H1 (cell line): ENCODE measurements at regions of chr15 and their contacts with region 1.

Region 1: DNA sequence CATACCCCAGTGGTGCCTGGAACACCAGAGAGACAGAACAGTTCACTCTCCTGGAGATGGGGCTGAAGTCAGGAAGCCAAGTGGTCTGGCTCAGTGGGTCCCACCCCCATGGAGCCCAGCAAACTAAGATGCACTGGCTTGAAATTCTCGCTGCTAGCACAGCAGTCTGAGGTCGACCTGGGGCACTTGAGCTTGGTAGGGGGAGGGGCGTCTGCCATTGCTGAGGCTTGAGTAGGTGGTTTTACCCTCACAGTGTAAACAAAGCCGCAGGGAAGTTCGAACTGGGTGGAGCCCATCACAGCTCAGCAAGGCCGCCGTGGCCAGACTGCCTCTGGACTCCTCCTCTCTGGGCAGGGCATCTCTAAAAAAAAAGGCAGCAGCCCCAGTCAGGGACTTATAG is 272.0 kb downstream of the KLF13 start:
- DNase-seq: peak; percentile 50 to 67
- H3K4me3 ChIP-seq: no peak overlapping the region; a peak in 1 of 8 replicates
- H3K27ac ChIP-seq: peak overlapping the region; percentile 45
- H3K4me1 ChIP-seq: peaks cover 0 to 7% (median 4%) of the 10 kb centered on the region in 4 experiments; a peak in 4 of 7 replicates
- H3K27me3 ChIP-seq: no peaks in the 10 kb centered on the region
- CTCF ChIP-seq: no peak
- EP300 ChIP-seq: no peak
- POLR2A ChIP-seq: no peak
- RAD21 ChIP-seq: no peak

Region 2: DNA sequence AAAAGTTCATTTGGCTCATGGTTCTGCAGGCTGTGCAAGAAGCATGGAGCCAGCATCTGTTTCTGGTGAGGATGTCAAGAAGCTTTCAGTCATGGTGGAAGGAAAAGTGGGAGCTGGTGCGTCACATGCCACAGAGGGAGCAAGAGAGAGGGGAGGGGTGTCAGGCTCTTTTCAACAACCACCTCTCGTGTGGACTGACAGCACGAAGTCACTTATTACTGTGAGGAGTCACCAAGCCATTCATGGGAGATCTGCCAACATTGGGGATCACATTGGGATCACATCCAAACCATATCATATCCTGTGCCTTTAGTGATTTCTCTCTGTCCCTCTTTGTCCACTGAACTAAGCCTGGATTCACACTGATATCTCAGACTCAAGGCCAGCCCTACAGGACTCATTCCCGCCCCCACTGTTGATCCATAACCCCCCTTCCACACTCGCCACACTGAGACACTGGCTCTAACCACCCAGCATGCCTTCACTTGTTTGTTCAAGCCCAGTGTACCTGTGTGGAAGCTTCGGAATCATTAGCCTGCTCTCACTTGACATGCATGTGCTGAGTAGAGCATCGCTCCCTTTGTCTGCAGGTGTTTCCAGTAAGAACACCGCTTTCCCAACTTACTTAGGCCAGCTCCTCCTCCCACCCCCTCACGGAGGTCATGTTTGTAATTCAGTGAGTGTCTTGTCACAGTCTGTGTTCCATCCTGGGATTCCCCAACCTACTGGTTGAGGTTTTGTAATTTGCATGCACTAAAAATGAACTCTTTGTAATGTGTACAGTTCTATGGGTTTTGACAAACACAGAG is 139.8 kb before region 1 on chr15:
- CTCF ChIA-PET with region 1: no interaction called
- POLR2A ChIA-PET with region 1: no interaction called
- DNase-seq: no peak
- H3K4me3 ChIP-seq: no peak overlapping the region
- H3K27ac ChIP-seq: no peak overlapping the region
- H3K4me1 ChIP-seq: peaks cover 0 to 6% (median 0%) of the 10 kb centered on the region in 4 experiments; a peak in 4 of 7 replicates
- H3K27me3 ChIP-seq: no peaks in the 10 kb centered on the region
- CTCF ChIP-seq: no peak
- EP300 ChIP-seq: no peak
- POLR2A ChIP-seq: no peak
- RAD21 ChIP-seq: no peak

Region 3: GRCh38 chr15:31584195-31584594 is 14.4 kb before region 1 on chr15:
- CTCF ChIA-PET with region 1: no interaction called
- POLR2A ChIA-PET with region 1: no interaction called
- DNase-seq: no peak
- H3K4me3 ChIP-seq: no peak overlapping the region
- H3K27ac ChIP-seq: no peak overlapping the region
- H3K4me1 ChIP-seq: no peaks in the 10 kb centered on the region
- H3K27me3 ChIP-seq: no peaks in the 10 kb centered on the region
- CTCF ChIP-seq: no peak
- EP300 ChIP-seq: no peak
- POLR2A ChIP-seq: no peak
- RAD21 ChIP-seq: no peak

Region 4: DNA sequence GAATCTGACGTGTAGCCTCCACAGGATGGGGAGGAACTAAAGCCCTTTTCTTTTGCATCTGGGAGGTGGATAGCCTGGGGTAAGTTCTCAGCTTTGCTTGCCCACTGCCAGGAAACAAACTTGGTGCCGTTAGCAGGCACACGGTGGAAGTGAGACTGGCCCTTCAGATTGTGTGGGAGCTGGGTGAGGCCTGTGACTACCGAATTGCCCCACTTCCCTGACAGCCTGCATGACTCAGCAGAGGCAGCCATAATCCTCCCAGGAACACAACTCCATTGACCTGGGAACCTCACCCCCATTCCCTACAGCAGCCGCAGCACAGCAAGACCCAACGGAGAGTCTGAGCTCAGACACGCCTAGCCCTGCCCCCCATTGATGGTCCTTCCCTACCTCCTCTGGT is 10.6 kb after region 1 on chr15:
- CTCF ChIA-PET with region 1: interaction called, 10 read pairs
- POLR2A ChIA-PET with region 1: no interaction called
- DNase-seq: no peak
- H3K4me3 ChIP-seq: no peak overlapping the region
- H3K27ac ChIP-seq: no peak overlapping the region
- H3K4me1 ChIP-seq: peaks cover 0 to 4% (median 3%) of the 10 kb centered on the region in 4 experiments; a peak in 4 of 7 replicates
- H3K27me3 ChIP-seq: no peaks in the 10 kb centered on the region
- CTCF ChIP-seq: no peak
- EP300 ChIP-seq: no peak
- POLR2A ChIP-seq: no peak
- RAD21 ChIP-seq: no peak